ENCODE measurements at regions of chr1 and their contacts with region 1.

Region 1: GRCh38 chr1:156319664-156320063 is 18.4 kb downstream of the CCT3 start:
- DNase-seq: peak; percentile 51
- H3K4me3 Mint-ChIP-seq: no peak overlapping the region
- H3K27ac Mint-ChIP-seq: no peak overlapping the region
- H3K4me1 Mint-ChIP-seq: peaks cover 5% of the 10 kb centered on the region
- H3K27me3 Mint-ChIP-seq: no peaks in the 10 kb centered on the region
- CTCF ChIP-seq: peak; percentile 58

Region 2: GRCh38 chr1:156090822-156091188 is 228.9 kb before region 1 on chr1:
- CTCF ChIA-PET with region 1: interaction called, 3 read pairs
- POLR2A ChIA-PET with region 1: interaction called, 3 read pairs
- intact Hi-C with region 1: loop called (anchors 1 kb)
- DNase-seq: peak; percentile 95
- H3K4me3 Mint-ChIP-seq: no peak overlapping the region
- H3K27ac Mint-ChIP-seq: no peak overlapping the region
- H3K4me1 Mint-ChIP-seq: peaks cover 8% of the 10 kb centered on the region
- H3K27me3 Mint-ChIP-seq: no peaks in the 10 kb centered on the region
- CTCF ChIP-seq: peak; percentile 98

Region 3: DNA sequence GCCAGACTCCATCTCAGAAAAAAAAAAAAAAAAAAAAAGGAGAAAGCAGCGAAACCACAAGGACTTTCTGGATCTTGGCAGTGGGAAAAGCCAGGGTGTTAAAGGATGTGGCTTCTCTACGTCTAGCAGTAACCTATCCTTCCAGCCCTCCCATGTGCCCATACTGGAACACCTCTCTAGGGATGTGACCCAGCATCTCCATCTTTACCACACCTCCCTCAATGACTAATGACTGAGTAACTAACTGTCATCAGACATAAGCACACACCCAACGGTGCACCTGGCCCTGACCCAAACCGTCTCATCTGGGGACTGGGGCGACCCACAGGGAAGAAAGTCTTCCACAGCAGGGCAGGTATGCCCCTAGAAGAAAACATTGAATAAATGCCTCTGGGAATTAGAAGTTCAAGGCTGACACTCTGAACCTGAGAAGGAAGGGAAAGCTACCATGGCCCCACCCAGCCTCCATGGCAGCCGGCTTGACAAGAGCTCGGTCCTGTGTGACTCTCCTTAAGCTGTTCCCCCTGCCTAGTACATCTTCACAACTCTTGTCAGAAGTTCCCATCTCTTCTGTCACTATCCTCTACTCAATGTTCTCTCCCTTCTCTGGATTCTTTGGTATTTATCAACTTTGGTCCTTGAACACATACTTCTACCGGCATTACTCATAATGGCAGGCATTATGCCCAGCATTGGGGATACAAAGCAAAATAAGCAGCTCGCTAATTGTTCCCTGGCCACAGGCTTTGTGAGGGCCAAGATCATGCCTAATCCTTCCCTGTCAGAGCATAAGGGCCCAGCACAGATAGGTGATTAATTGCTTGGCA is 57.0 kb before region 1 on chr1:
- CTCF ChIA-PET with region 1: interaction called, 6 read pairs
- POLR2A ChIA-PET with region 1: interaction called, 4 read pairs
- intact Hi-C with region 1: loop called (anchors 2 kb)
- DNase-seq: peak; percentile 90
- H3K4me3 Mint-ChIP-seq: peak overlapping the region; percentile 13
- H3K27ac Mint-ChIP-seq: peak overlapping the region; percentile 92
- H3K4me1 Mint-ChIP-seq: peaks cover 40% of the 10 kb centered on the region
- H3K27me3 Mint-ChIP-seq: no peaks in the 10 kb centered on the region
- CTCF ChIP-seq: no peak

Region 4: DNA sequence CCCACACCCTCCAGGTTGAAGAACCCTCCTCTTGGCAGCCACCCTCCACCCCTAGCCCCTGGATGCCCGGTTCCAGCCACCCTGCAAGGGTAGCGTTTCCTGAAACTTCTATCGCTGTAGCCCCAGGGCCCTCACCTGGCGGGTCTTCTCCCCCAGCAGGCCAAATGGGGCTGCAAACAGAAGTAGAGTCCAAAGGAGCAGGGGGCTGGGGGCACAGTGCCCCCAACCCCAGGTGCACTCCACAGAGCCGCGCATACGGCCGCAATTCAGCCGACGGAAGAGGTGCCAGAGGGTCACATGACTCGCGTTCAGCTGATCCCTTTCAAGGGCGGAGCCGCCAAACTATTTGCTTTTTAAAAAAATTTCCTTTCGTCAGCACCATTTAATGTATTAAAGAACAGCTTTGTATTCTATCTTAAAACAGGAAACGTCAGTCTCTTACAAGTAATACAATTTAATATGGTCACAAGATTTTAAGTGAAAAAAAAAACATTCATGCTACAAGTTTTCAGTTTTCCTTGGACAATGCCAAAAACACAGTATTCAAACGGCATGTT is 24.2 kb before region 1 on chr1 and contains the start of gene GLMP:
- CTCF ChIA-PET with region 1: interaction called, 16 read pairs
- POLR2A ChIA-PET with region 1: interaction called, 5 read pairs
- intact Hi-C with region 1: no loop called
- DNase-seq: peak; percentile 53
- H3K4me3 Mint-ChIP-seq: peak within 1 kb of the TSS; percentile 93
- H3K27ac Mint-ChIP-seq: peak within 1 kb of the TSS; percentile 96
- H3K4me1 Mint-ChIP-seq: peaks cover 19% of the 10 kb centered on the region
- H3K27me3 Mint-ChIP-seq: no peaks in the 10 kb centered on the region
- CTCF ChIP-seq: no peak
- total RNA-seq, gene GLMP: 12.9 and 17.5 TPM in 2 replicates

Region 5: DNA sequence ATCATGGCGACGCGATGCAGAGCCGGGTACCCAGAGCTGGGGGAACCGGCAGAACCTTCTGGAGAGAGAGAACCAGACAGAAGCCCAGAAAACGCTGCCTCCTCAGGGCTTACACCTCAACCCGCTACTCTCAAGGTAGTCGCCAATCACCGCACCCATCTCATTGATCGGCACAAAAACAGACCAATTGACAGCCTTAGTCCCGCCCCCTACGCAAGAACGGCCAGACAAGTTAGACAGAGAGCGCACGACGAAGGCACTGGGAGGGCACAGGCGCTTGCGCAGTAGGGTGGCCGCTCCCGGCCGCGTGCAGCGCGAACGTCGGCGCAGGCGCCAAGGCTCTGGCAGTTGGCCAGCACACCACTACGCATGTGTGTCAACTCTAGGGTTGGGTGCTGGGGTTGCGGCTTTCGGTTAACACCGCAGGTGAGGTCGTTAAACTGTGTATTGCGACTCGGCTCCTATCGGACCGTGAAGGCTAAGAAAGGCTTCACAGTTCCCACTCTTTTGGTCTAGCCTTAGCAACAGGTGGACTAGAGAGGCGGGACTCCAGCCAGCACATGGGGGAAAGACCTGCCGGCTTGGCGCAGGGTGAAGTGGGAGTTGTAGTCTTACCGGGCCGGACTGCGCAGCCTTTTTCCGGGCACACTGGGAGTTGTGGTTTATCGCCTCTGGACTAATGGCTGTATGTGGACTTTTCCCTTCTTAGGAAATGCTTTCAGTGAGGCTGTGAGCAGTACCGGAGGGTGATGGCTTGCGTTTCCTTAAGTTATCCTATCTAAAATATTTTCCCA is 18.7 kb after region 1 on chr1 and contains the starts of genes CCT3 and TSACC:
- CTCF ChIA-PET with region 1: interaction called, 152 read pairs
- POLR2A ChIA-PET with region 1: interaction called, 21 read pairs
- intact Hi-C with region 1: no loop called
- DNase-seq: peak; percentile 100
- H3K4me3 Mint-ChIP-seq: peak within 1 kb of the TSS; percentile 96
- H3K27ac Mint-ChIP-seq: peak within 1 kb of the TSS; percentile 76
- H3K4me1 Mint-ChIP-seq: peaks cover 24% of the 10 kb centered on the region
- H3K27me3 Mint-ChIP-seq: no peaks in the 10 kb centered on the region
- CTCF ChIP-seq: no peak
- total RNA-seq, gene CCT3: 495 and 574 TPM in 2 replicates
- total RNA-seq, gene TSACC: 1.8 and 3.6 TPM in 2 replicates

Region 6: GRCh38 chr1:156368889-156369684 is 49.4 kb after region 1 on chr1 and contains the start of gene RHBG:
- CTCF ChIA-PET with region 1: no interaction called
- POLR2A ChIA-PET with region 1: no interaction called
- intact Hi-C with region 1: no loop called
- DNase-seq: peak; percentile 36
- H3K4me3 Mint-ChIP-seq: peak within 1 kb of the TSS; percentile 70
- H3K27ac Mint-ChIP-seq: no peak within 1 kb of the TSS
- H3K4me1 Mint-ChIP-seq: no peaks in the 10 kb centered on the region
- H3K27me3 Mint-ChIP-seq: peaks cover 45% of the 10 kb centered on the region
- CTCF ChIP-seq: no peak
- total RNA-seq, gene RHBG: not detected in 2 replicates

Region 7: DNA sequence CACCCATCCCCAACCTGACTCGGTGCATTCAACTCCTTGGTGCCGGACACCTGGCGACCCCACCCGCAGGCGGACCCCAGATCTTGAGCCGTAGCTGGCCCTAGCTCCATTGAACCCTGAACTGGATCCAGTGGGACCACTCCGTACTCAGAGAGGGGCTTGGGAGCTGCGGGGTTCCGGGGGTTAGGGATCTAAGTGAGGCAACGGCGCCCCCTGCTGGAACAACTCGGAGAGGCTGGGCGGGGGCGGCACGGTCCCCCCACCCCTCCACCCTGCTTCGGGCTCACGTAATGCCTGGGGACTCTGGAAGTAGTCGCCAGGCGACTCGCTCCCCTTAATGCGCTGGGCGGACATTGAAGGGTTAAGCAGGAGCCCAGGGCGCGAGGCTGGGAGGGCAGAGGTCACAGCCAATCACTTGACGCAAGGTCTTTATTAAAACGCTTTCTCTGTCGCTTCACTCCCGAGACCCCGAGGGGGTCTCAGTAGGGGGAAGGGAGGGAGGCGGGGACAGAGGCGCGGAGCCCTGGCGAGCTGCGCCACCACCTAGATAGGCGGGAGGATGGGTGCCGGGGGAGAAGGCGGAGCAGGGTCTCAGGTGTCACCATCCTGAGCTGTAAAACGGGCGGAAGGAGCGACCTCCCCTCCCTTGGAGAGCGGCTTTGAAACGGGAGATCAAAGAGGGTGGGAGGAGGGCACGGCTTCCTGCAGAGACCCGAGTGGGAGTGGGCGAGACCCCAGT is 386.4 kb after region 1 on chr1:
- CTCF ChIA-PET with region 1: no interaction called
- POLR2A ChIA-PET with region 1: no interaction called
- intact Hi-C with region 1: no loop called
- DNase-seq: peak; percentile 57
- H3K4me3 Mint-ChIP-seq: peak overlapping the region; percentile 30
- H3K27ac Mint-ChIP-seq: no peak overlapping the region
- H3K4me1 Mint-ChIP-seq: peaks cover 38% of the 10 kb centered on the region
- H3K27me3 Mint-ChIP-seq: no peaks in the 10 kb centered on the region
- CTCF ChIP-seq: peak; percentile 99